Breast epithelium (tissue), 4 donors: ENCODE measurements at regions of chrX and their contacts with region 1.

Region 1: DNA sequence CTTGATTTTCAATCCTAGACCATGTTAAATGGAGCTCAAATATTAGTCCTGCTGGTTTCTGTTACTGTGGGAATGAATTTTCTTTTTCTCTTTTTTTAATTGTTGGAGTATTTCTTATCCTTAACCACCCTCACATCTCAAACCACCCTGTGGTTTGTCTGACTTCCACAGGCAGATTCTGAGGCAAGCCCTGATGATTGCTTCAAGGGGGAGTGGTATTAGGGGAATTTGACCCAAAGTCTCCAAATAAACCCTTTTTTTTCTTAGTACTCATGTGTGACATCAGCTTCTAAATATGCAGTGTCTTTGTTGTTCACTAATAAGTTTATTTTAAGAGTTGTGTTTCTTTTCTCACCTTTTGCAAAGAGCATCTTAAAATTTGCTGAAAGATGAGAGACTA is 810.3 kb downstream of the IL1RAPL1 start:
- DNase-seq: no peak
- H3K4me3 ChIP-seq: no peak overlapping the region
- H3K27ac ChIP-seq: no peak overlapping the region
- H3K4me1 ChIP-seq: no peaks in the 10 kb centered on the region
- H3K27me3 ChIP-seq: peaks cover 0 to 13% of the 10 kb centered on the region in 2 donors
- CTCF ChIP-seq: no peak
- POLR2A ChIP-seq: no peak

Region 2: GRCh38 chrX:29431895-29432294 is 34.4 kb after region 1 on chrX:
- intact Hi-C with region 1: loop called (anchors 2 kb)
- DNase-seq: no peak
- H3K4me3 ChIP-seq: no peak overlapping the region
- H3K27ac ChIP-seq: no peak overlapping the region
- H3K4me1 ChIP-seq: no peaks in the 10 kb centered on the region
- H3K27me3 ChIP-seq: peaks cover 0 to 8% of the 10 kb centered on the region in 2 donors
- CTCF ChIP-seq: no peak
- POLR2A ChIP-seq: no peak